ENCODE measurements at regions of chr6 and their contacts with region 1.

Region 1: GRCh38 chr6:149717588-149718458 is at the start of gene LATS1:
- DNase-seq: peak; percentile 97
- H3K4me3 ChIP-seq: peak within 1 kb of the TSS; percentile 83 to 91 (median 86)
- H3K27ac ChIP-seq: peak within 1 kb of the TSS; percentile 96 to 99 (median 98)
- H3K4me1 ChIP-seq: peaks cover 27 to 46% (median 44%) of the 10 kb centered on the region in 4 donors
- H3K27me3 ChIP-seq: no peaks in the 10 kb centered on the region
- CTCF ChIP-seq: peak in 1 of 3 experiments; percentile 10
- EP300 ChIP-seq: no peak
- POLR2A ChIP-seq: peak; percentile 54
- total RNA-seq, gene LATS1: 27.0 to 33.6 (median 30.1) TPM

Region 2: GRCh38 chr6:149545754-149546528 is 171.9 kb before region 1 on chr6 and contains the start of gene PPIL4:
- intact Hi-C with region 1: loop called (anchors 10 kb)
- DNase-seq: peak; percentile 98
- H3K4me3 ChIP-seq: peak within 1 kb of the TSS; percentile 91 to 99 (median 96)
- H3K27ac ChIP-seq: peak within 1 kb of the TSS; percentile 95 to 98 (median 97)
- H3K4me1 ChIP-seq: peaks cover 32 to 38% (median 35%) of the 10 kb centered on the region in 4 donors
- H3K27me3 ChIP-seq: no peaks in the 10 kb centered on the region
- CTCF ChIP-seq: peak; percentile 74 to 76 (median 75)
- EP300 ChIP-seq: no peak
- POLR2A ChIP-seq: peak; percentile 54
- total RNA-seq, gene PPIL4: 22.1 to 30.2 (median 26.1) TPM